PC-3 (cell line): ENCODE measurements at regions of chr14 and their contacts with region 1.

Region 1: GRCh38 chr14:23306410-23307145 is at the start of gene BCL2L2:
- DNase-seq: peak; percentile 87
- ATAC-seq: peak; percentile 55
- H3K4me3 ChIP-seq: peak within 1 kb of the TSS; percentile 86
- H3K27ac ChIP-seq: peak within 1 kb of the TSS; percentile 50
- H3K4me1 ChIP-seq: peaks cover 24% of the 10 kb centered on the region
- H3K27me3 ChIP-seq: no peaks in the 10 kb centered on the region
- CTCF ChIP-seq: no peak
- total RNA-seq, gene BCL2L2: 32.4 and 33.5 TPM in 2 replicates

Region 2: GRCh38 chr14:23446291-23446851 is 139.8 kb after region 1 on chr14:
- CTCF ChIA-PET with region 1: interaction called, 13 read pairs
- POLR2A ChIA-PET with region 1: no interaction called
- intact Hi-C with region 1: no loop called
- DNase-seq: no peak
- ATAC-seq: no peak
- H3K4me3 ChIP-seq: no peak overlapping the region
- H3K27ac ChIP-seq: no peak overlapping the region
- H3K4me1 ChIP-seq: no peaks in the 10 kb centered on the region
- H3K27me3 ChIP-seq: peaks cover 50% of the 10 kb centered on the region
- CTCF ChIP-seq: no peak

Region 3: GRCh38 chr14:23469127-23469905 is 162.7 kb after region 1 on chr14 and contains the start of gene NGDN:
- CTCF ChIA-PET with region 1: no interaction called
- POLR2A ChIA-PET with region 1: no interaction called
- intact Hi-C with region 1: loop called (anchors 5 kb)
- DNase-seq: peak; percentile 100
- ATAC-seq: peak; percentile 96
- H3K4me3 ChIP-seq: peak within 1 kb of the TSS; percentile 89
- H3K27ac ChIP-seq: no peak within 1 kb of the TSS; the same call in 1 of the 2 replicates
- H3K4me1 ChIP-seq: peaks cover 8% of the 10 kb centered on the region; the same call in 1 of the 2 replicates
- H3K27me3 ChIP-seq: no peaks in the 10 kb centered on the region
- CTCF ChIP-seq: peak; percentile 74
- total RNA-seq, gene NGDN: 57.6 and 77.3 TPM in 2 replicates